ENCODE measurements at regions of chr11 and their contacts with region 1.

Region 1: GRCh38 chr11:2137202-2138071 is 1.8 kb downstream of the IGF2 start:
- DNase-seq: peak; percentile 95
- H3K4me3 ChIP-seq: peak overlapping the region in 1 of 2 experiments; percentile 41; a peak in 1 of 4 replicates
- H3K27ac ChIP-seq: peak overlapping the region in 1 of 2 experiments; percentile 34; a peak in 1 of 4 replicates
- H3K4me1 ChIP-seq: peaks cover 0 to 17% of the 10 kb centered on the region in 2 experiments; a peak in 1 of 4 replicates
- H3K27me3 ChIP-seq: peaks cover 37% of the 10 kb centered on the region
- CTCF ChIP-seq: no peak
- EP300 ChIP-seq: no peak
- RAD21 ChIP-seq: no peak

Region 2: GRCh38 chr11:1946812-1947484 is 190.5 kb before region 1 on chr11 and contains the start of gene MRPL23:
- CTCF ChIA-PET with region 1: interaction called, 15 read pairs
- POLR2A ChIA-PET with region 1: interaction called, 4 read pairs
- DNase-seq: no peak
- H3K4me3 ChIP-seq: no peak within 1 kb of the TSS
- H3K27ac ChIP-seq: no peak within 1 kb of the TSS
- H3K4me1 ChIP-seq: peaks cover 0 to 15% of the 10 kb centered on the region in 2 experiments; a peak in 1 of 4 replicates
- H3K27me3 ChIP-seq: no peaks in the 10 kb centered on the region
- CTCF ChIP-seq: no peak
- EP300 ChIP-seq: no peak
- RAD21 ChIP-seq: no peak
- polyA plus RNA-seq, gene MRPL23: 226 and 264 TPM in 2 replicates

Region 3: DNA sequence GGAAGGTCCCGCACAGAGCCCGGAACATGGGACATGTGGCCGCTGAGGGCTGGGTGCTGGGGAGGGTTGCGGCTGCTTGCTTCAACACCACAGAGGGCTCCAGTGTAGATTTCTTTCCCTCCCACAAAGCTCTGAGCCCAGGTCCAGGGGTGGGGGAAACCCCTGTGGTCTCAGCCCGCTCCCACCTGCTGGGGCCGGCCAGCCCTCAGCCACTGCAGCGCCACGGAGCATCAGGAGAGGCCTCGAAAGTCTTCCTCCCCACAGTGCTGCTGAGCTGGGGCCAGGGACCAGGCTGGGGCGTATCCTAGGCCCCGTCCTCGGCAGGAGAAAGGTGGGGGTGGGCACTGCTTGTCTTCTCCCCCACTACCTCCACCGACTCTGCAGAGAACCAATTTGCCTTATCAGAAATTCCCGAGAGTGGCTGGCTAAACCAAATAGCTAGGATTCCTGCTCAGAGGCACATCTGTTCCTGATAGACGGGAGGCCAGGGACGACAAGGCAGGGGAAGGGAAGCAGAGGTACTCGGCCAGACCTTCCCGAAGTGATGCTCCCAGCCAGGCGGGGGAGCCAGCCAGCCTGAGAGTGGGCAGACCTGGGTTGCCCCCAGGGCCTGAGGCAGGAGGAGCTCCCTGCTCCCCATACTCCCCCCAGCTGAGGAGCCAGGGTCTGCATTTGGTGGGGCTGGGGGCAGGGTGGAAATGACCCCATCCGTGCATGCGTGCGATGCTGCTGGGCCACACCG is 16.9 kb before region 1 on chr11:
- CTCF ChIA-PET with region 1: interaction called, 11 read pairs
- POLR2A ChIA-PET with region 1: interaction called, 6 read pairs
- DNase-seq: peak; percentile 92
- H3K4me3 ChIP-seq: no peak overlapping the region
- H3K27ac ChIP-seq: peak overlapping the region in 1 of 2 experiments; percentile 43; a peak in 1 of 4 replicates
- H3K4me1 ChIP-seq: peaks cover 0 to 11% of the 10 kb centered on the region in 2 experiments; a peak in 1 of 4 replicates
- H3K27me3 ChIP-seq: no peaks in the 10 kb centered on the region
- CTCF ChIP-seq: no peak
- EP300 ChIP-seq: no peak
- RAD21 ChIP-seq: peak; percentile 10; the same call in 1 of the 2 replicates